Posterior cingulate gyrus (tissue), 11 donors: ENCODE measurements at regions of chr2 and their contacts with region 1.

Region 1: GRCh38 chr2:112626604-112627059 is 19.1 kb upstream of the SLC20A1 start:
- DNase-seq: peak; percentile 64 to 95 (median 79)

Region 2: DNA sequence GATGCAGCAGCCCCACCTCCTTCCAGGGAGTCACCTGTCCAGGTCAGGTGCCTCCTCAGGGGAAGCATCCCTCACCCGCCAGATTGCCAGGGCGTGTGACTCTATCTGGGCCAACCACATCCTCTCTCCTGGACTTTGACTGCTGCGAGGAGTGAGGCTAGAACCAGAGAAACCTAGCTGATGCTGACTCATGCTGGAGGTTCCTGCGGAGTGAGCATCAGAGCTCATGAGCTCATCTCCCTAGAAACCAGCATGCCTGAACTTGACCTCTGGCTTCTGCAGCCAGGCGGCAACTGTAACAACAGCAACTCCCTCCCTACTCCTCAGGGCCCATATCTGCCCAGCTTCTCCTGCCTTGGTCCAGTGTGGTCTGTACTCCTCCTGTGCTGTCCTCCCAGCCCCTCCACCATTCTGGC is 65.9 kb after region 1 on chr2:
- intact Hi-C with region 1: loop called (anchors 1 kb)
- DNase-seq: no peak

Region 3: DNA sequence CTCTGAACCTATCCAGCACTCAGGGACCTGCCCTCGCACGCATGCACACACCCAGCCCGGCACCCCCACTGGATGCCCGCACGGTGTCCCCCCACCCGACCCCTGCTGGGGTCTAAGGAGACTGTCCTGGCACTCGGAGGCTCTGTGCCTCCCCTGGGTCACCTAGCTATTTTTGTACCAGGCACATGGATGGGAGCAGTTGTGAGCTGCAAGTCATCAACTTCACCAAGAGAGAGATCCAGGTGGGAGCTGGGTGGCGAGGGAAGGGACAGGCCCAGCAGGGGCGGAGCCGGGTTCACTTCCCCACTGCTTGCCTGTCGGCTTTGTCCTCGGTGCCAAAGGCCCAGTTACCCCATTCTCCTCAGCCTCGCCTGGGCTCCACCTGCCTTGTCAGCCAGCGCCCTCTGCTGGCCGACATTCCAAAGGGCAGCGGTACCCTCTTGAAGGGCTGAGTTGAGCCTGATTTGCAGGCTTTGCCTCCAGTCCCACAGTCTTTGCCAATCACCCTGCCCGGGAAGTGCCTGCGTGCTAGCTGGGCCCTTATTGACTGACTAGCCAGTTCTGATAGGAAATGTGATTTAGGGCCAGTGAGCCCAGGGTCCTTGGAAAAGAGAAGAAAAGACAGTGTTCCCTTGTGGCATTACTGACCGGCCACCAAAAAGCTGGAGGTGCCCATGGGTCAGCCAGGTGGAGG is 100.0 kb after region 1 on chr2:
- intact Hi-C with region 1: loop called (anchors 1 kb)
- DNase-seq: peak; percentile 78 to 98 (median 90)

Region 4: DNA sequence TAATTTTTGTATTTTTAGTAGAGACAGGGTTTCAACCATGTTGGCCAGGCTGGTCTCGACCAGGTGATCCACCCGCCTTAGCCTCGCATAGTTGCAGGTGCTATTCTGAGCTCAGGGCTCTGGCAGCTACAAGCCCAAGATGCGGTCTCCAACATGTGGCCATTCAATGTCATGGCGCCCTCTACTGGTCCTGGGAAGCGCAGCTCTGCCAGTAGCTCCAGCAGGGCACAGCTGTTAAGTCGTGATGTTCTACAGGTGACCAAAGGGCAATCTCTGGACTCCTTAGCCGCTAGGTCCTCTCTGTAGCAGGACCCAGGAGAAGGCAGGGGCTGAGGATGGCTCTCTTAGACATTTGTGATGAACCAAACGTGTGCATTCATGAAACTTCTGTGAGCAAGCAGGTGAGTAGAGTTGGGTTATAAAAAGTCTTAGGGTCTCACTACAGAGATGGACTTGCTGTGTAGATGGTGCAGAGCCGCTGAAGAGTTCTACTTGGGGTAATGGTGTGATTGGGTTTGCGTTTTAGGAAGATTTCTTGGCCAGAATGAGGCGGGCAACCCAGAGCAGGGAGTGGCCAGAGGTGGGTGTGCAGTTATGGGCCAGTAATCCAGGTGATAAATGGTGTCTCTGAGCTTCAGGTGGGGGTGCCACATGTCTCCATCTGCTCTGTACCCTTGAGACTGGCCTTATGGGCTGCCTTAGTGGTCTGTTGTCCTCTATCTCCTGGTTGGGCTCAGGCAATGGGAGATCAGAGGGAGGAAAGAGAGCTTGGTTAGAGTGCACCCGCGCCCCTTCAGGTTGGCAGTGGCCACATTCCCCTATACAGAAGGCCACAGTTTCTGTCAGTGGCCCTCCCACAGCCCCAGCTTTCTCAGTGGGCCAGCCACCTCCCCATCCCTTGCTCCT is 315.4 kb after region 1 on chr2:
- intact Hi-C with region 1: loop called (anchors 10 kb)
- DNase-seq: peak; percentile 57 to 97 (median 80)